AG04449 (cell line): ENCODE measurements at regions of chr14 and their contacts with region 1.

Region 1: DNA sequence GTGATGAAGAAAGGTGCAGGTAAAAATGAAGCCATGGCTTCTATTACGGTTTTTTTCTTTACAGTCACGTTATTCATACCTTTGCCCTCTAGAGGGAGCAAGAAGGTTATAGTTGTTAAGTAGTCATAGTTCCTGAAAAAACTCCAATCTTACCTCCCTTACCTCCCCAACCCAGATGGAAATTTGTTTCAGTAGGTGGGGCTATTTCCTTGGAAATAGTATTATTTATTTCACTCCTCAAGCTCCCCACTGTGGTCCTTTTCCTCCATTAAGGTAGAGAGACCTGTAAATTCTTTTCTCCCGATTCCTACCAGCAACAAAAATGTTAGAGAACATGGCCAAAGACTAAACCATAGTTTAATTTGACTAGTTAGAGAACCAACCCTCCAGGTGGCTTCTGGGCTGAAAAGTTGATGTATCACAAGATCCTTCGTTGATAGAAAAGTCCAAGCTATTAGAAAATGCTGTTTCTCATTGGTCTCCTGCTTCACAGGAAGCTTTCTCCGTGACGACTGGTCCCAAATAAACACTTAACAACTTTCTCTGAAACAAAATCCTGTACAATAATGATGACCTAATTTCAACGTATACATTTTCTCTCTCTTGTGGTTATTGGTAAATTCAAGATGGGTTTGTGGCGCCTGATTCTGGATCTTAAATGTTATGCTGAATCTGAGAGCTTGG is 43.5 kb downstream of the TMX1 start:
- DNase-seq: peak; percentile 77
- H3K4me3 ChIP-seq: no peak overlapping the region
- CTCF ChIP-seq: peak; percentile 38

Region 2: DNA sequence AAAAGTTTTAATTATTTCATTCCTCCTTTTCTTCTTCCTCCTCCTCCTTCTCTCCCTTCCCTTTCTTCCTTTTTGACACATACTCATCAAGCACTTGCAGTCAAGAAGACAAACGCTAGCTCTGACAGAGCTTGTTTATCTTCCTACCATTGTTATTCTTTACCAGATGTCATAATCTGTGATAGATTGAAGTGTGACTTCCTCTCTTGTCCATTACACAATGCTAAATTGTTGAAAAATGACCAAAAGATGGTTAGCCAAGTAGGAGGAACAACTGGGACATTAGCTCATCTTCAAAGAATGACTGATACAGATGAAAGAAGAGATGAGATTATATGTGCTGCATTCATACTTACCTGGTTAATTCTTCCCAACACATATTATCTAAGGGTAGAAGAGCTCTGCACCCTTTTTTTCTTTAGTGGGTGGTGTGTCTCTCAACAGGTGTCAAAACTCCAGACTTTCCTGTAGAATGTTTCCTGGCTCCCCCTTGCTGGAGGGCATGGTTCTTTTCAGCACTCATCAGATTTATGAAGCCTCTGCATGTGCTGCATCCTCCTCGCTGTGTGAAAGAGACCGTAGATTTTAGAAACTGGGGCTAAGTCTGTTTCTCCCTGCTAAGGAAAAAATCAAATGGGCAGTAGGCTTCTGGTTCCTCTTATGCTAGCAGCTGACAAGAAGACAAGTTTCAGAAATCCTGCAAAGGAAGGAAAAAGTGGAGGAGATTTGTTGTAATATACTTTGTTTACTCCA is 103.6 kb after region 1 on chr14:
- CTCF ChIA-PET with region 1: interaction called, 11 read pairs
- POLR2A ChIA-PET with region 1: no interaction called
- DNase-seq: no peak
- H3K4me3 ChIP-seq: no peak overlapping the region
- CTCF ChIP-seq: no peak

Region 3: GRCh38 chr14:51527073-51527472 is 243.5 kb after region 1 on chr14:
- CTCF ChIA-PET with region 1: interaction called, 17 read pairs
- POLR2A ChIA-PET with region 1: no interaction called
- DNase-seq: no peak
- H3K4me3 ChIP-seq: no peak overlapping the region
- CTCF ChIP-seq: no peak

Region 4: DNA sequence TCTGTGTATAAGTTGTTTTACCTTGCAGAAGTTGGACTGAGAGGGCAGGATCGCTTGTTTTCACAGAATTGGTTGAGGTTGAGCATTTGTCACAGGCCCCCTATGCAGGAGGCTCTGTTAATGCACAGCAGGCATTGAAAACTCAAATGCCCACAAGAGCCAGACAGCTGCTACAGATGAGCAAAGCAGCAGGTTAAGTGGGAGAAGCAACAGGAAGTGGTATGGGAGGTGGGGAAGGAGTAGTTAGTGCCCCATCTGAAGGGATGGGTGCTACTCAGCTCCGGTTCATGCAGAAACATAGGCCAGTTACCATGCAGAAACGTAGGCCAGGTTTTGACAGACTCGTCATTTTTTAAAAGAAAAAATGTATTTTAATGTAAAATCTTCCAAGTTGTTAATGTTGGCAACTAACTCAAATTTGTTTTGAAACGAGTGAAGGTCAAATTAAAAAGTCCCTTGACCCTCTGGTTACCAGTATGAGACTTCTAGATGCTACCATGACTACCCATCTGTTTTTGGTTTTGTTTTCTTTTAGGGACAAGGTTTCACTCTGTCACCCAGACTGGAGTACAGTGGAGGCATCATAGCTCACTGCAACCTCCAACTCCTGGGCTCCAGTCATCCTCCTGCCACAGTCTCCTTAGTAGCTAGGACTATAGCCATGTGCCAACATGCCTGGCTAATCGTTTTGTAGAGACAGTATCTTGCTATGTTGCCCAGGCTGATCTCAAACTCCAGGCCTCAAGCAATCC is 283.5 kb after region 1 on chr14:
- CTCF ChIA-PET with region 1: interaction called, 28 read pairs
- POLR2A ChIA-PET with region 1: interaction called, 3 read pairs
- DNase-seq: no peak
- H3K4me3 ChIP-seq: no peak overlapping the region
- CTCF ChIP-seq: no peak

Region 5: GRCh38 chr14:51651388-51652167 is 368.0 kb after region 1 on chr14 and contains the start of gene FRMD6:
- CTCF ChIA-PET with region 1: interaction called, 28 read pairs
- POLR2A ChIA-PET with region 1: interaction called, 3 read pairs
- DNase-seq: no peak
- H3K4me3 ChIP-seq: peak within 1 kb of the TSS; percentile 83
- CTCF ChIP-seq: peak; percentile 59

Region 6: DNA sequence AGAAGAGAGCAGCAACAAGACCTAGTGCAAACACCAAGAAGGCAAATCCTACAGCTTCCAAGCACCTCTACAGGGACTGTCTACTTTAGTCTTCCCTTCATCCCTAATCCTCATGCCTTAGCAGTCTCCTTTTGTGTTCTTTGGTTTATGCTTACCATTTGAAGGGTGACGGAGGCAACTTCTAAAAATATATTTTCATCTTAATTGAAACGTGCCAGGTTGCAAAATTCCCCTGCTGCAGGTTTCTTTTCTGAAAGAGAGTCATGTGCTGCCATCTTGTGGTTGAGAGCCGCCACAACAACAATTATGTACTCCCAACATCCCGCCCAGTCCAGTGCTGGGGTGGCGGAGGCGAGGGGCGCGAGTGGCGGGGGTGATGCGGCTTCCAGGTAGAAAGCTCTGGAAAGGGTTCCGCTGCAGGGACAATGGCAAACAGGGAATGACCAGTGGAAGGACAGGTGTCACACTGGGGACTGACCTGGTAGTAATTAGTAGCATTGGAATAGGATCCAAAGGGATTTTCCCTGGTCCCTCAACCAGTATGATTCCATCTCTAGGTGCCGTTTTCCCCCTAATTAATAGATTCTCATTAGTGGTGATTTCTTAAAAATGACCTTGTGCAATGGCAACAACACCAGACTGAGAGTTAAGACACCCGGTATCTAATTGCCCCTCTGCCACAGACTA is 496.6 kb after region 1 on chr14:
- CTCF ChIA-PET with region 1: interaction called, 429 read pairs
- POLR2A ChIA-PET with region 1: no interaction called
- DNase-seq: no peak
- H3K4me3 ChIP-seq: no peak overlapping the region; the same call in 1 of the 2 replicates
- CTCF ChIP-seq: peak; percentile 61